Breast epithelium (tissue), 4 donors: ENCODE measurements at regions of chr1 and their contacts with region 1.

Region 1: DNA sequence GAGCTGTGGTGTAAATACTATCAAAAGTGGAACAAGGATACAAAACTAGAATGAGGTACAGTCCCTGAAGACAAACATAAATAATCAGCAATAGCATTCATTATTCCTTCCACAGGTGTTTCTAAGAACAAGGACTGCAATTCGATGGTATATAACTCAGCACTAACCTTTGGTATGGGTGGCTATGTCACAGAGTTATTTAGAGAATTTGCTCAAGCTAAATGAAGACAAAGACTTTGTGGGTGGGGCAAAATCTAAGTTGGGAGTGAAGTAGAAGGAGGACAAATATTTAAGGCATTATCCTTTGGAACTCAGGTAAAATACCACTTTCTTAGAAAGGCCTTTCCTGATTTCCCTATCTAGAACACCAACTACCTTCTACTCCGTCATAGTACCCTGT is 51.5 kb upstream of the CNN3 start:
- DNase-seq: no peak
- H3K4me3 ChIP-seq: no peak overlapping the region
- H3K27ac ChIP-seq: no peak overlapping the region
- H3K4me1 ChIP-seq: peaks cover 0 to 5% of the 10 kb centered on the region in 2 donors
- H3K27me3 ChIP-seq: no peaks in the 10 kb centered on the region
- CTCF ChIP-seq: no peak
- POLR2A ChIP-seq: no peak

Region 2: DNA sequence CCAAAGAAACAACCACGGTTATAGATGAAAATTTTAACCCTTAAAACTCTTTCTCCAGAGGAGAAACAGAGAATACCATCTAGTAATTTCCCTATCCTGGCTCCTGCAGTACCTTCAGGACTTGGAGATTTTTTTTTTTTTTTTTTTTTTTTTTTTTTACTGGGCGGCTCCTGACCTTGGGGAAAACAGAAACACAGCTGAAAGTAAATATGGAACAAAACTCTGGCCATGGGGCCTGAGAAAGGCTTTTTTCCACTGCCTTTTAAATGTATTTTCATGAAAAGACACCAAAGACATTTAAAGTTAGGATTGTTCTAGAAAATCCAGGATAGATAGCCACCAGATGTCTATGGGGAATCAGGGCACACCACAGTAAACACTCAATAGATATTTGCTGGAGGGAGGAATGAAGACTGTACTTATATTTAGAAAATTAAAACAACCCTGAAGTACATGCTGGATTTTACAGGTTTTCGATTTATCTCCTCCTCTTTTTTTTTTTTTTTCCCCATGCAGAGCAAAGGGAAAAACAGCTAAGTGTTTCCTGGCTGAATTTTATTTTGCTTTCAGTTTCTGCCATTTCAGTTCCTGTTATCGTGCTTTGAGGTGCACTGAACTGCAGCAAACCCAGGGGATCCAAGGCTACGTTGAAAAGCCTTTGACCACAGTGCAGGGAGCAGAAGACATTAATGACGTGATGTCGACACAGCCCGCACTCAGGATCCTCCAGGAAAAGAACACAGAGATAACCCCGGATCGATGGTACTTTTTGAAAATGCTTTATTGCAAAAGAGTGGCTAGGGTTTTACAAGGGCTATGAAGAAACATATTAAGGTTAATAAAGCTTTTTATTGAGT is 15.8 kb before region 1 on chr1:
- intact Hi-C with region 1: loop called (anchors 1 kb)
- DNase-seq: no peak
- H3K4me3 ChIP-seq: peak overlapping the region; percentile 34 to 58 (median 34)
- H3K27ac ChIP-seq: peak overlapping the region; percentile 73 to 74
- H3K4me1 ChIP-seq: no peaks in the 10 kb centered on the region
- H3K27me3 ChIP-seq: no peaks in the 10 kb centered on the region
- CTCF ChIP-seq: no peak
- POLR2A ChIP-seq: no peak

Region 3: GRCh38 chr1:95520390-95520789 is 542.0 kb after region 1 on chr1:
- intact Hi-C with region 1: no loop called
- DNase-seq: no peak
- H3K4me3 ChIP-seq: no peak overlapping the region
- H3K27ac ChIP-seq: no peak overlapping the region
- H3K4me1 ChIP-seq: no peaks in the 10 kb centered on the region
- H3K27me3 ChIP-seq: no peaks in the 10 kb centered on the region
- CTCF ChIP-seq: no peak
- POLR2A ChIP-seq: no peak

Region 4: DNA sequence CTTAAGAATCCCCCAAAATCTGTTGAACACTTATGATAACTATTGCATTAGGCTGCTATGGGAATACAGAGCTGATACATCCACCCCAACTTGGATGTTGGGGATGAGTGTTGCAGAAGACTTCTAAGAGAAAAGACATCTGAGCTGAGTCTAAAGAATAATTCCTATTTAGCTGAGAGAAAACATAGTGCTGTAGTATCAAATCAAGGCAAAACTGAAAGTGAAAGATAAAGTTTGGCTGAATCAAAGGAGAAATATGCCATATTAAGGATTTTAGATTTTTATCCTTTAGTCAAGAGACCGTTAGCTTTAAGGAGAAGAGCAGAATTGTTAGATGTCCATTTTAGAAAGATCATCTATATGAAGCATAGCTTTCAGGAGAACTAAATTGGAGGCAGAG is 1016.2 kb after region 1 on chr1:
- intact Hi-C with region 1: no loop called
- DNase-seq: no peak
- H3K4me3 ChIP-seq: peak overlapping the region in 2 of 3 donors; percentile 8 to 42
- H3K27ac ChIP-seq: no peak overlapping the region
- H3K4me1 ChIP-seq: no peaks in the 10 kb centered on the region
- H3K27me3 ChIP-seq: no peaks in the 10 kb centered on the region
- CTCF ChIP-seq: no peak
- POLR2A ChIP-seq: no peak